GM12878 (cell line): ENCODE measurements at regions of chr2 and their contacts with region 1.

Region 1: GRCh38 chr2:224938651-224939182 is 103.6 kb downstream of the DOCK10 start:
- DNase-seq: no peak
- ATAC-seq: peak; percentile 64
- H3K4me3 ChIP-seq: peak overlapping the region; percentile 62
- H3K27ac ChIP-seq: peak overlapping the region; percentile 88
- H3K4me1 ChIP-seq: peaks cover 31% of the 10 kb centered on the region
- H3K27me3 ChIP-seq: no peaks in the 10 kb centered on the region
- CTCF ChIP-seq: no peak
- EP300 ChIP-seq: peak; percentile 37 to 52; a peak in 2 of 4 replicates
- POLR2A ChIP-seq: no peak
- RAD21 ChIP-seq: no peak

Region 2: GRCh38 chr2:224894356-224894755 is 44.4 kb before region 1 on chr2:
- CTCF ChIA-PET with region 1: interaction called, 3 read pairs
- POLR2A ChIA-PET with region 1: interaction called, 5 read pairs
- RAD21 ChIA-PET with region 1: interaction called, 14 read pairs
- SMC1A ChIA-PET with region 1: interaction called, 22 read pairs
- in situ Hi-C with region 1: no loop called
- intact Hi-C with region 1: loop called (anchors 5 kb)
- DNase-seq: peak; percentile 71
- ATAC-seq: peak; percentile 90
- H3K4me3 ChIP-seq: peak overlapping the region; percentile 13; the same call in 1 of the 2 replicates
- H3K27ac ChIP-seq: peak overlapping the region; percentile 88
- H3K4me1 ChIP-seq: peaks cover 40% of the 10 kb centered on the region
- H3K27me3 ChIP-seq: no peaks in the 10 kb centered on the region
- CTCF ChIP-seq: no peak
- EP300 ChIP-seq: no peak
- POLR2A ChIP-seq: no peak
- RAD21 ChIP-seq: no peak

Region 3: GRCh38 chr2:224922142-224922727 is 16.5 kb before region 1 on chr2:
- CTCF ChIA-PET with region 1: interaction called, 83 read pairs
- POLR2A ChIA-PET with region 1: interaction called, 34 read pairs
- RAD21 ChIA-PET with region 1: interaction called, 40 read pairs
- SMC1A ChIA-PET with region 1: interaction called, 443 read pairs
- in situ Hi-C with region 1: no loop called
- intact Hi-C with region 1: no loop called
- DNase-seq: peak; percentile 71
- ATAC-seq: peak; percentile 78
- H3K4me3 ChIP-seq: no peak overlapping the region
- H3K27ac ChIP-seq: peak overlapping the region; percentile 47
- H3K4me1 ChIP-seq: peaks cover 45% of the 10 kb centered on the region
- H3K27me3 ChIP-seq: no peaks in the 10 kb centered on the region
- CTCF ChIP-seq: no peak
- EP300 ChIP-seq: peak; percentile 36 to 89; a peak in 3 of 4 replicates
- POLR2A ChIP-seq: no peak
- RAD21 ChIP-seq: no peak

Region 4: GRCh38 chr2:224927646-224928173 is 11.0 kb before region 1 on chr2:
- CTCF ChIA-PET with region 1: interaction called, 83 read pairs
- POLR2A ChIA-PET with region 1: interaction called, 34 read pairs
- RAD21 ChIA-PET with region 1: interaction called, 40 read pairs
- SMC1A ChIA-PET with region 1: interaction called, 443 read pairs
- in situ Hi-C with region 1: no loop called
- intact Hi-C with region 1: no loop called
- DNase-seq: no peak
- ATAC-seq: no peak
- H3K4me3 ChIP-seq: no peak overlapping the region
- H3K27ac ChIP-seq: peak overlapping the region; percentile 71
- H3K4me1 ChIP-seq: peaks cover 62% of the 10 kb centered on the region
- H3K27me3 ChIP-seq: no peaks in the 10 kb centered on the region
- CTCF ChIP-seq: no peak
- EP300 ChIP-seq: no peak
- POLR2A ChIP-seq: no peak
- RAD21 ChIP-seq: no peak

Region 5: DNA sequence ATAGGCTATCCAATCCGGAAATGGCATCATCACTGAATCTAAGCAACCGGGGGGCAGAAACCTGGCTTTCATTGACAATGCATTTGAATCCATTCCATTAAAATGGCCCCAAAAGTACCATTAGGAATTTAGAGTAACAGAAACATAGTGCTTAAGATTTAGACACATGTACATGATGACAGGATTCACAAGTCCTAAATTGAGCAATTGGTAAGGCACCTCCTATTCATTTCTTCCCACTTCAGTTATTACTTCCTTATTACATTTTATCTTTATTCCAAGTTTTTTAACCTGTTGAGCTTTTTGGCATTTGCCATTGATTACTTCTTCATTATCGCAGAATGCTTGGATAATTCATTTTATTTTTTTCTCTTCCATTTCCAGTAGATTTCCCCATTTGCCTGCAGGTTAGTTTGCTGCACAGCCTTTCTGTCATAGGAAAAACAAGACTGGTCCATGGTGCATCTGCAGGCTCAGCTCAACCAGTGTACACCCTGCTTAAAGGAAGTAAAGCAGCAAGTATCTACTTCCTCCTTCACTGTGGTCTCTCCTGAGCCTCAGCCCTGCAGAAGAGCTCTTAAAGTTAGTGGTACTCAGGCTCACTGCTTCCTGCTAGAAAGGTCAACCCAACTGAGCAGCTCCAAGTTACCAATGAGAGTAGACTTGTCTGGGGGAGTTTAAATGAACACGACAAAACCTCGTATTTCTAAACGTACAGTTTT is 14.4 kb after region 1 on chr2:
- CTCF ChIA-PET with region 1: interaction called, 7 read pairs
- POLR2A ChIA-PET with region 1: interaction called, 6 read pairs
- RAD21 ChIA-PET with region 1: interaction called, 20 read pairs
- SMC1A ChIA-PET with region 1: interaction called, 443 read pairs
- in situ Hi-C with region 1: no loop called
- intact Hi-C with region 1: loop called (anchors 1 kb)
- DNase-seq: no peak
- ATAC-seq: peak; percentile 74
- H3K4me3 ChIP-seq: no peak overlapping the region
- H3K27ac ChIP-seq: 0 out of 2 replicates have a peak overlapping the region, but pooled peaks have one; percentile 6
- H3K4me1 ChIP-seq: peaks cover 74% of the 10 kb centered on the region
- H3K27me3 ChIP-seq: no peaks in the 10 kb centered on the region
- CTCF ChIP-seq: no peak
- EP300 ChIP-seq: no peak
- POLR2A ChIP-seq: no peak
- RAD21 ChIP-seq: no peak

Region 6: DNA sequence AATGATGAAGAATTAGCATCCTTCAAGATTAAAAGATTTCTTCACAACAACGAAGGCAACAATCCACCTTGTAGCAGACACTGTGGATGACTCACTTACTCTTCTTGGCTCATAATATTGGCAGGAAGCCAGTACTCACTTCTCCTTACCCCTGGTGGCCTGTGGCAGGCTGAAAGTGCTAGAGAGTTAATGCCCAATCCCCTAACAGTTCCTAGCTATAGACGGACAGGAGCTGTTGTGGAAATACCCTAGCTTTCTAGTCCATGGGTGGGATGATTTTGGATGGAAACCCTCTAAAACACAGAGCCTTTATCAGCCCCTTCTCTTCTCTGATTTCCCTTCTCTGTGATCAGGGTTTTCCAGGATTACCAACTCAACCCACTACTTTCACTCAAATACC is 332.1 kb after region 1 on chr2:
- CTCF ChIA-PET with region 1: no interaction called
- POLR2A ChIA-PET with region 1: no interaction called
- RAD21 ChIA-PET with region 1: no interaction called
- SMC1A ChIA-PET with region 1: interaction called, 3 read pairs
- in situ Hi-C with region 1: loop called (anchors 10 kb)
- intact Hi-C with region 1: no loop called
- DNase-seq: peak; percentile 82
- ATAC-seq: peak; percentile 97
- H3K4me3 ChIP-seq: no peak overlapping the region; the same call in 1 of the 2 replicates
- H3K27ac ChIP-seq: peak overlapping the region; percentile 42; the same call in 1 of the 2 replicates
- H3K4me1 ChIP-seq: peaks cover 23% of the 10 kb centered on the region
- H3K27me3 ChIP-seq: no peaks in the 10 kb centered on the region
- CTCF ChIP-seq: peak in 1 of 3 experiments; percentile 8; a peak in 1 of 6 replicates
- EP300 ChIP-seq: peak in 1 of 2 experiments; percentile 91; a peak in 2 of 4 replicates
- POLR2A ChIP-seq: no peak
- RAD21 ChIP-seq: no peak